K562 (cell line): ENCODE measurements at regions of chr11 and their contacts with region 1.

Region 1: GRCh38 chr11:74138572-74138971 is 32.2 kb downstream of the C2CD3 start:
- DNase-seq: peak; percentile 32 to 76 (median 47)
- ATAC-seq: peak; percentile 92
- H3K4me3 ChIP-seq: no peak overlapping the region
- H3K27ac ChIP-seq: peak overlapping the region; percentile 69
- H3K4me1 ChIP-seq: peaks cover 0 to 21% of the 10 kb centered on the region in 2 experiments; a peak in 2 of 5 replicates
- H3K27me3 ChIP-seq: no peaks in the 10 kb centered on the region
- CTCF ChIP-seq: no peak
- EP300 ChIP-seq: peak; percentile 59; the same call in 1 of the 2 replicates
- POLR2A ChIP-seq: no peak
- RAD21 ChIP-seq: no peak

Region 2: DNA sequence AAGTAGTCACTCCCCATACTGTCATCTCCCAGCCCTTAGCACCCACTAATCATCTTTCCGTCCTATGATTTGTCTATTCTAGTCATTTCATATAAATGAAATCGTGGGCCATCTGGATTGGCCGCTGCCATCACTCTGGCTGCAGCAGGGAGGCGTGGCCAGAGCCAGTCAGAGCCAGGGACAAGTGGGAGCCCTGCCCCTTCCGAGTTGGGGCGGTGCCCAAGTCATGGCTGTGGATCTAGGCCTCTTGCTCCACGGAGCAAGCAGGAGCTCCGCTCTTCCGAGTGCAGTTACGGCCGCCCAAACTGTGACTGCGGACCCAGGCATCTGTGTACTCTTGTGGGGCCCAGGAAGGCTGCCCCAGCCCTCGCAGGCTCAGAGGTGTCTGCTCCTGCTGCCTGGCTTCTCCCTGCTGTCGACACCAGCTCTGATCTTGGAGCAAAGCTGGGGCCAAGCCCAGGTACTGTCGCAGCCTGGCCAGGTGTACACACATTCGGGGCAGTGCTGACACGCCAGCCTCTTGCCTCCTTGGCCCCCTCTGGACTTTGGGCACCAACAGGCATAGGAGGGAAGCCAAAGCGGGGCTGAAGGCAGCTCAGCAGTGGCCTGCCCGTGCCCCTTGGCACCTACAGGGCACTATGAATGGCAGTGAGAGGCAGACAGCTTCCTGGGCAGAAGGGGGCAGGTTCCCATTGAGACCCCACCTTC is 342.5 kb before region 1 on chr11:
- CTCF ChIA-PET with region 1: no interaction called
- POLR2A ChIA-PET with region 1: no interaction called
- in situ Hi-C with region 1: no loop called
- intact Hi-C with region 1: no loop called
- DNase-seq: no peak
- ATAC-seq: peak; percentile 38; the same call in 1 of the 3 replicates
- H3K4me3 ChIP-seq: no peak overlapping the region
- H3K27ac ChIP-seq: no peak overlapping the region
- H3K4me1 ChIP-seq: peaks cover 11% of the 10 kb centered on the region in 2 experiments
- H3K27me3 ChIP-seq: no peaks in the 10 kb centered on the region
- CTCF ChIP-seq: no peak
- EP300 ChIP-seq: no peak
- POLR2A ChIP-seq: no peak
- RAD21 ChIP-seq: no peak

Region 3: DNA sequence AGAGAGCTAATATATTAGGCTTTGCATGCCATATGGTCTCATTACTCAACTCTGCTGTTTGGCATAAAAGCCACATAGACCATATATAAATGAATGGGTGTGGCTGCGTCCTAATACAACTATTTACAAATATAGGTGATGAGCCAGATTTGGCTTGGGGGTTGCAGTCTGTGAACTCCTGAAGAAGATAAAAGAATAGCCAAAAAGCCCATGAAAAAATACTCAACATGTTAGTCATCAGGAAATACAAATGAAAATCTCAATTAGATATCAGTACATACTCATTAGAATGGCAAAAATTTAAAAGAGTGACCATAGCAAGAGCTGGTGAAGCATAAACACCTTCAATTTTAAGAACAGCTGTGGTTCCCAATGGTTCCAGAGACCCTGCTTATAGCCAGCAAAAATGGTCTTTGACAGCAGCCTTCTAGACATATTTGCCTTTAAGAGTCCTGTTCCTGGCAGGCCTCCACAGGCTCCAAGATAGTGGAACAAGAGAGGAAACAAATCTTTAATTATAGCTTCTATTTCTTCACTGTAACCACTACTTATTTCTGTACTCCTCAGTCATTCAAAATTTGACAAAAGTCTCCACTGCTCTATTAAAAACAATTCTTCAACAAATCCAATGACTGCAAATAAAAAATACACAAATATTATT is 16.2 kb after region 1 on chr11:
- CTCF ChIA-PET with region 1: no interaction called
- POLR2A ChIA-PET with region 1: interaction called, 14 read pairs
- in situ Hi-C with region 1: no loop called
- intact Hi-C with region 1: no loop called
- DNase-seq: no peak
- ATAC-seq: no peak
- H3K4me3 ChIP-seq: no peak overlapping the region
- H3K27ac ChIP-seq: no peak overlapping the region
- H3K4me1 ChIP-seq: peaks cover 0 to 3% of the 10 kb centered on the region in 2 experiments; a peak in 1 of 5 replicates
- H3K27me3 ChIP-seq: no peaks in the 10 kb centered on the region
- CTCF ChIP-seq: no peak
- EP300 ChIP-seq: no peak
- POLR2A ChIP-seq: no peak
- RAD21 ChIP-seq: no peak